ENCODE measurements at regions of chr4 and their contacts with region 1.

Region 1: DNA sequence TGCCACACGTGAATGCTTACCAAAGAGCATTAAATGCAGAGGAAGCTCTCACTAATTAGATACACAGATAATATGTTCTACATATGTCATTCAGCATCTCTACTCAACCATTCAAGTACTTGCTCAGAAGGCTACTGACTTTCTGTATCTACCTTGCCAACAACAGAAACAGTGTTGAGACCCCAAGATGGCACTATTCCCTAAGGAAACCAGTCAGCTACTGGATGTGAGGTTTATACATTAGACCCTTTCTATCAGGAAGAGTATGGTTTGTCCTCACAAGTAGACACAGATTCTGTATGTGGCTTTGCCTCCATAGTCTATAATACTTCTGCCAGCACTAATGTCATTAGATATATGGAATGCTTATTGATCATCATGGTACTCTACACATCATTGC is 443.9 kb upstream of the INTU start:
- ATAC-seq: peak in 3 of 8 experiments; percentile 26 to 83 (median 29)
- H3K4me3 ChIP-seq: no peak overlapping the region
- H3K27ac ChIP-seq: no peak overlapping the region
- H3K4me1 ChIP-seq: no peaks in the 10 kb centered on the region

Region 2: DNA sequence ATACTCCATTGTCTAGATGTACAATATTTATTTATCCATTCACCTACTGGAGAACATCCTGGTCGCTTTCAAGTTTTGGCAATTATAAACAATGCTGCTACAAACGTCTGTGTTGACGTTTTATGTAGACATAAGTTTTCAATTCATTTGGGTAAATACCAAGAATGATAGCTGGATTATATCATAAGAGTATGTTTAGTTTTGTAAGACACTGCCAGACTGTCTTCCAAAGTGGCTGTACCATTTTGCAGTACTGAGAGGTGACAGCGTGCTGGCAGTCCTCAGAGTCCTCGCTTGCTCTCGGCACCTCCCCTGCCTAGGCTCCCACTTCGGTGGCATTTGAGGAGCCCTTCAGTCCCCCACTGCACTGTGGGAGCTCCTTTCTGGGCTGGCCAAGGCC is 190.6 kb after region 1 on chr4:
- in situ Hi-C with region 1: loop called in 1 of 9 experiments (anchors 25 kb)
- ATAC-seq: no peak
- H3K4me3 ChIP-seq: no peak overlapping the region
- H3K27ac ChIP-seq: no peak overlapping the region
- H3K4me1 ChIP-seq: no peaks in the 10 kb centered on the region

Measured in motor neuron (in vitro differentiated cells).